Heart left ventricle (tissue), 16 donors: ENCODE measurements at regions of chr12 and their contacts with region 1.

Region 1: DNA sequence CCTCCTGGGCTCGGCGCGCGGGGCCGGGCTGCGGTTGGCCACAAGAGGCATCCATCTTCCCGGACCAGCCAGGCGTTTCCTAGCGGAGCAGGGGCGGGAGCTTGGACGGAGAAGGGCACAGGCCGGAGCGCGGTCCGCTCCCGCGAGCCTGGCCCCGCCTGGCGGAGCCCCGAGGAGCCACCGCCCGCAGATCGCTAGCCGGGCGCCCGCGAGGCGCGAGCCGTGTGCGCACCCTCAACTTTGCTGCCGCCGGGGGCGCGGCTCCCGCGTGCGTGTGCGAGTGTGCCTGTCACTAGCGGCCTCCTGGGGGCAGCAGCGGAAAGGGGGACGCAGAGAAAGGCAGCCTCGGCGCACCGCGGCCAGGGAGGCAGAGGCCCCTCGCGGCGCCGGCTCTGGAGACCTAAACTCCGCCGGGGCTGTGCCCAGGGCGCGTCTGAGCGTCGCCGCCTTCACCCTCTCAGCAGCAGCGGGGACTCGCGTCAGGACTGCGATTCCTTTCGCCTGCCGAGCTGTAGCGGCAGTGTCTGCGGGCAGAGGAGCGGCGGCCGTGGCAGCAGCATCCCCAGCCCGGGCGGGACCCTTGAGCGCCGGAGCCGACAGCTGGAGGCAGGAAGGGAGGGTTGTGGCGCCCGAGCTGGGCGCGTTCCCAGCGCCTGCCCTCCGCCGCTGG is 644 bp upstream of the SRGAP1 start:
- DNase-seq: peak; percentile 92 to 96 (median 94)
- ATAC-seq: peak; percentile 84 to 95 (median 92)
- H3K4me3 ChIP-seq: peak overlapping the region; percentile 63 to 100 (median 94)
- H3K27ac ChIP-seq: peak overlapping the region; percentile 79 to 96 (median 94)
- H3K4me1 ChIP-seq: peaks cover 0 to 36% (median 9%) of the 10 kb centered on the region in 12 donors
- H3K27me3 ChIP-seq: no peaks in the 10 kb centered on the region
- CTCF ChIP-seq: peak; percentile 88 to 99 (median 96)
- POLR2A ChIP-seq: no peak

Region 2: GRCh38 chr12:63930971-63931370 is 87.1 kb after region 1 on chr12:
- intact Hi-C with region 1: loop called in 1 of 10 experiments (anchors 5 kb)
- DNase-seq: no peak
- ATAC-seq: peak in 1 of 4 donors; percentile 69
- H3K4me3 ChIP-seq: no peak overlapping the region
- H3K27ac ChIP-seq: no peak overlapping the region
- H3K4me1 ChIP-seq: peaks cover 0 to 12% (median 0%) of the 10 kb centered on the region in 12 donors
- H3K27me3 ChIP-seq: no peaks in the 10 kb centered on the region
- CTCF ChIP-seq: no peak
- POLR2A ChIP-seq: no peak

Region 3: DNA sequence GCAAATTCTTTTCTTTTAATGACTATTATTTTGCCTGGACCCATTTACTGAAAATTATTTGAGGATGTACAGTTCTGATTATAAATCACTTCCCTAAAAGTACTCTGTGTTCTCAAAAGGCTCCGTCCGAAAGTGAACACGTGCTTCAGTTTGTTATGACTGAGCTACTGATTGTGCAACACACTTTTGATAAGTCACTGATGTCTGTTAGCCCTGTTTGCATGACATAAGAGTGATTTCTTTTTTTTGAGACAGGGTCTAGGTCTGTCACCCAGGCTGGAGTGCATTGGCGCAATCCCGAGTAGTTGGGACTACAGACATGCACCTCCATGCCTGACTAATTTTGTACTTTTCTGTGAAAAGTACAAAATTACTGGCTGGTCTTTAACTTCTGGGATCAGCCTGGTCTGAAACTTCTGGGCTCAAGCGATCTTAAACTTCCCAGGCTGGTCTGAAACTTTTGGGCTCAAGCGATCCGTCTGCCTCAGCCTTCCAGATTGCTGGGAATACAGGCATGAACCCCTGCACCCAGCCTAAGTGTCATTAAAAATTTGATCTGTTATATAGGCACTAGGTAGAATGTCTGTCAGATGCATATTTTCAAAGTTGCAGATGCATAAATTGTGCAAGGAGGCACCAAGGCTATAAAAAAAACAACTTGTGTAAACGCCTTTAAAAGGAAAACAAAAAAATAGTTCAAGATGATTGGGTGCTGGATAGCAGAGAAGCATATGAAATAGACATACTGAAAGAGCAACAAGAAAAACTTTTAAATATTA is 112.2 kb after region 1 on chr12:
- intact Hi-C with region 1: loop called in 1 of 10 experiments (anchors 10 kb)
- DNase-seq: peak in 2 of 5 donors; percentile 38 to 42
- ATAC-seq: peak; percentile 83 to 90 (median 89)
- H3K4me3 ChIP-seq: peak overlapping the region in 3 of 12 donors; percentile 6 to 17 (median 9)
- H3K27ac ChIP-seq: peak overlapping the region in 4 of 12 donors; percentile 39 to 77 (median 50)
- H3K4me1 ChIP-seq: peaks cover 0 to 32% (median 6%) of the 10 kb centered on the region in 12 donors
- H3K27me3 ChIP-seq: no peaks in the 10 kb centered on the region
- CTCF ChIP-seq: no peak
- POLR2A ChIP-seq: no peak

Region 4: GRCh38 chr12:64088431-64089349 is 244.8 kb after region 1 on chr12:
- intact Hi-C with region 1: loop called in 9 of 10 experiments (anchors 5 to 10 kb)
- DNase-seq: peak in 4 of 5 donors; percentile 42 to 78 (median 68)
- ATAC-seq: peak; percentile 93 to 97 (median 96)
- H3K4me3 ChIP-seq: peak overlapping the region in 7 of 12 donors; percentile 1 to 35 (median 15)
- H3K27ac ChIP-seq: peak overlapping the region; percentile 59 to 88 (median 82)
- H3K4me1 ChIP-seq: peaks cover 0 to 39% (median 28%) of the 10 kb centered on the region in 12 donors
- H3K27me3 ChIP-seq: no peaks in the 10 kb centered on the region
- CTCF ChIP-seq: no peak
- POLR2A ChIP-seq: no peak

Region 5: GRCh38 chr12:64181504-64182291 is 337.8 kb after region 1 on chr12:
- intact Hi-C with region 1: loop called (anchors 1 to 2 kb)
- DNase-seq: peak in 4 of 5 donors; percentile 40 to 52 (median 48)
- ATAC-seq: peak; percentile 88 to 92 (median 88)
- H3K4me3 ChIP-seq: peak overlapping the region in 1 of 12 donors; percentile 8
- H3K27ac ChIP-seq: peak overlapping the region in 6 of 12 donors; percentile 0 to 77 (median 48)
- H3K4me1 ChIP-seq: peaks cover 0 to 37% (median 5%) of the 10 kb centered on the region in 12 donors
- H3K27me3 ChIP-seq: no peaks in the 10 kb centered on the region
- CTCF ChIP-seq: peak; percentile 46 to 76 (median 66)
- POLR2A ChIP-seq: no peak

Region 6: GRCh38 chr12:64392221-64392620 is 548.4 kb after region 1 on chr12:
- intact Hi-C with region 1: loop called in 1 of 10 experiments (anchors 10 kb)
- DNase-seq: no peak
- ATAC-seq: no peak
- H3K4me3 ChIP-seq: no peak overlapping the region
- H3K27ac ChIP-seq: no peak overlapping the region
- H3K4me1 ChIP-seq: peaks cover 0 to 15% (median 5%) of the 10 kb centered on the region in 12 donors
- H3K27me3 ChIP-seq: peaks cover 0 to 38% (median 18%) of the 10 kb centered on the region in 9 donors
- CTCF ChIP-seq: peak in 6 of 12 donors; percentile 12 to 28 (median 20)
- POLR2A ChIP-seq: no peak